PC-3 (cell line): ENCODE measurements at regions of chr9 and their contacts with region 1.

Region 1: DNA sequence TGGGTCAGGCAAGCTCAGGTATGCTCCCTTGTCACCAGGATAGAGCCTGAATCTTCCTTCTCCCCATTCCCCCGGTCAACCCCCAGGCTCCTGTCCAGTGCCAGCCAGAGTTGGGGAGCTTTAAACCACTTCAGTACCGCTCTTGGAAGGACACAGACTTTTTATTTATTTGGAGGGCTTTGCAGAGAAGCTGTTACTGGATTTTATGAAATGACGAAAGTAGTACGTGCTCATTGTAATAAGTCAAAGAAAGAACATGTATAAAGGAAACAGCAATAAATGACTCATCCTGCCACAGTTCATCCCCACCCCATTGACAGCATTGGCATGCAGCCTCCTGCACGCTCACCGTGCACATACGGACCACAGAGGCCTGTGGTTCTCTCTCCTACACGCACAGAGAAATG is 230.3 kb downstream of the AUH start:
- DNase-seq: peak; percentile 88
- ATAC-seq: peak; percentile 89
- H3K4me3 ChIP-seq: peak overlapping the region; percentile 30; the same call in 1 of the 2 replicates
- H3K27ac ChIP-seq: peak overlapping the region; percentile 99
- H3K4me1 ChIP-seq: peaks cover 41% of the 10 kb centered on the region
- H3K27me3 ChIP-seq: no peaks in the 10 kb centered on the region
- CTCF ChIP-seq: no peak

Region 2: DNA sequence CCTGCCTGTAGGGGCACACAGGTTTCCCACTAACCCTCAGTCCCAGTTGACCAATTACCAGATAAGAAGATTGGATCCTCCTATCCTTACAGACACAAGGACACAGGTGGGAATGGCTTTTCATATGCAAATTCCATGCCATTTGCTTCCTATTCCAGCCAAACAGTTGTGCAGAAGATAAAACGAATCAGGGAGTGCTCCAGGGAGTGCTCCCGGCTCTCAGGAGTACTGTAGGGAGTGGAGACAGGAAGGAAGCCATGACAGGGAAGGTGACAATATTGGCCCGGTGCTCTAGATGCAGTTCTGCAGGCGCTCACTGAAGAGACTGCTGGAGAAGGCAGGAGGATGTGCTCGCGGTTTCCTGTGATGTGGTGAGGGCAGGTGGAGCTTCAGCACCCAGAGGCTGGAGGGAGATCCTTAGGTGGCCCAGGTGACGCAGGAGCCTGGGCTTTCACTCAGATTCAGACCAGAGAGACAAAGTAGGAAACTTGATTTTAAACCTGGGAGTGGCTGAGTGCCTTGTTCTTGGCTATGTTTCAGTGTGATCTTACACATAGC is 29.7 kb before region 1 on chr9:
- CTCF ChIA-PET with region 1: interaction called, 4 read pairs
- POLR2A ChIA-PET with region 1: no interaction called
- intact Hi-C with region 1: loop called (anchors 2 kb)
- DNase-seq: no peak
- ATAC-seq: no peak
- H3K4me3 ChIP-seq: no peak overlapping the region
- H3K27ac ChIP-seq: no peak overlapping the region
- H3K4me1 ChIP-seq: peaks cover 22% of the 10 kb centered on the region
- H3K27me3 ChIP-seq: no peaks in the 10 kb centered on the region
- CTCF ChIP-seq: no peak

Region 3: DNA sequence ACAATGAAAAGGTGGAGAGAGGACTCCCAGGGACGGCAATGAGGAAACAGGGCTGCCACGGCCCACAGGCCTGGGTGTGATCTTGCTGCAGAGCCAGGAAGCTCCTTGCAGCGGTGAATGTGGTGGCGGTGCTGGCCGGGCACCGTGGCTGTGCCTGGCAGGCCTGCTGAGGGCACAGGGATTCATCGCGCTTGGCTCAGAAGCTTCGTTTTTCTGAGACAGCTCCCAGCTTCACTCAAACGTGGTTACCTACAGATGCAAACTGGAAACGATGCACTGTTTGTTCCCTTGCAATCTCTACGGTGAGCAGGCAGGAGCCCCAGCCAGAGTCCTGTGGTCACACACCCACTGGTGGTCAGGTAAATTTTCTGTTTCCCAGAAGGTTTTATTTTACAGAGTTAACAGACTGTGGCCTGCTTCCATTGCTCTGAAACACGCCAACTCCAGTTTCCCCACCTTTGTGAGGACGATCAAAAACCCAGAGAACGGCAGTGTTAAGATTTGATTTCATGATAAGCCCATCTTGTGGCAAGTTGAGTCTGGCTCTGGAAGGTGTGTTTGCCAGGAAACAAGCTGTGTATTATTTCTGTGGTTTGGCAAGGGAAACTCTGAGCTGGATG is 46.3 kb after region 1 on chr9:
- CTCF ChIA-PET with region 1: no interaction called
- POLR2A ChIA-PET with region 1: no interaction called
- intact Hi-C with region 1: no loop called
- DNase-seq: peak; percentile 74
- ATAC-seq: peak; percentile 57
- H3K4me3 ChIP-seq: no peak overlapping the region
- H3K27ac ChIP-seq: peak overlapping the region; percentile 94
- H3K4me1 ChIP-seq: peaks cover 33% of the 10 kb centered on the region
- H3K27me3 ChIP-seq: no peaks in the 10 kb centered on the region
- CTCF ChIP-seq: no peak